Prostate gland (tissue), 2 donors: ENCODE measurements at regions of chr1 and their contacts with region 1.

Region 1: GRCh38 chr1:147627435-147628110 is 42.8 kb downstream of the ACP6 start:
- DNase-seq: peak; percentile 22
- H3K4me3 ChIP-seq: no peak overlapping the region
- H3K27ac ChIP-seq: peak overlapping the region in 1 of 2 donors; percentile 18
- H3K4me1 ChIP-seq: no peaks in the 10 kb centered on the region
- H3K27me3 ChIP-seq: no peaks in the 10 kb centered on the region
- CTCF ChIP-seq: peak; percentile 58 to 79 (median 72)
- POLR2A ChIP-seq: no peak

Region 2: DNA sequence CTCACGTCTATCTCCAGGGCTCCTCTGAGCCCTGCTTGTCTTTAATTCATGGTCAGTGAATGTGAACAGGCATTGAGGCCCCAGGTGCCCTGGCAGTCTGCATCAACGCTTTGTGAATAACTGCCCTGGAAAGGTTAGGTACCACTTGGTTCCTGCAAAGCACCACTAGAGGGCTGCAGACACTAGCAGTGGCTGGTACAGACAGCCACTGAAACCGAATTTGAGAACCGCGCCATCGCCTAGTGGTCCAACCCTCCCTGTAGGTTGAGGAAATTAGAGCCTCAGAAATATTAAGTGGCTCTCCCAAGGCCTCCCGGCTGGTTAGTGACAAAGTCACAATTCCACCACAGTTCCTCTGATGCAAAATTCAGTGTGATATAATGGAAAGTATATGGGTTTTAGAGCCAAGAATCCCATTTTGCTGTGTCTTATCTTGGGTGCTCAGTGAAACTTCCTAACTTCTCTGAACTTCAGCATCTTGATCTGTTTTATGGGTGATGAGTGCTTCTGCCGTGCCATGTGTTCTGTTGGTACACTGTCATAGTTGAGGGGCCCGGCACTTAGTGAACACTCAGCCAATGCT is 132.5 kb before region 1 on chr1:
- intact Hi-C with region 1: loop called (anchors 5 kb)
- DNase-seq: peak; percentile 67
- H3K4me3 ChIP-seq: no peak overlapping the region
- H3K27ac ChIP-seq: no peak overlapping the region
- H3K4me1 ChIP-seq: no peaks in the 10 kb centered on the region
- H3K27me3 ChIP-seq: no peaks in the 10 kb centered on the region
- CTCF ChIP-seq: peak; percentile 56 to 88 (median 86)
- POLR2A ChIP-seq: no peak

Region 3: DNA sequence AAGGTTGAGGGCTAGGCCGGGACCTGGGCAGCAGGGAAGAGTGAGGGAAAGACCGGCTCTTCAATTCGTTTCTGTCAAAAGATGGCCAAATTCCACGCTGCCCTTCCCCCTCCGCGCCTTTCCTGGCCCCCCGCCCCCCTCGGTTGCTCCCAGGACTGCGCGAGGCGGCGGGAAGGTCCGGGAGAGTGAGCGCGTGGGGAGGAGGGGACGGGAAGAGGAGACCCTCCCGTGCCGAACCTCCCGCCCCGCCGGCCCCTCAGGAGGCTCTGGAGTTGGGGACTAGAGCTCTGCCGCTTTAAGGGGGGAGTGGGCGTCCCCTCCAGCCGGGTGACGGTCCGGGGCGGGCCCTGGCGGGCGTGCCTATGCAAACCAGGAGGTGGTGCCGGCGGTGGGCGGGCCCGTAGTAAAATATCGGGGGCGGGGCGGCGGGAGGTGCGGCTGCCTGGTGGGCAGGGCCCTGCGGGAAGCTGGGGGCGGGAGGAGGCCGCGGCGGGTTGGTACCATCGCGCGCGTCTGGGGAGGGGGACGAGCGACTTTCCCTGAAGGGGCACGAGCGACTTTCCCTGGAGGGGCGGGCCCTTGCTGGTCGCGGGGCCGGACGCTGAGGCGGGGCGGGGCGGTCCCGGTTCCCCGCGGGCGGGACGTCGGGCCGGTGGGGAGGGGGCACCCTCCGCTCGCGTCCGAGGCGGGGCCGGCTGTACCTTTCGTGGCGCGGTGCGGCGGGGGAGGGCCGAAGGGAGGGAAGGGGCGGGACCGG is 28.0 kb before region 1 on chr1:
- intact Hi-C with region 1: loop called (anchors 2 kb)
- DNase-seq: peak; percentile 97
- H3K4me3 ChIP-seq: peak overlapping the region; percentile 56 to 80
- H3K27ac ChIP-seq: peak overlapping the region; percentile 90 to 92
- H3K4me1 ChIP-seq: peaks cover 6% of the 10 kb centered on the region
- H3K27me3 ChIP-seq: no peaks in the 10 kb centered on the region
- CTCF ChIP-seq: peak in 1 of 4 experiments; percentile 21
- POLR2A ChIP-seq: peak; percentile 82